ENCODE measurements at regions of chr5 and their contacts with region 1.

Region 1: GRCh38 chr5:92594031-92594430 is 987.0 kb downstream of the NR2F1-AS1 start:
- DNase-seq: no peak
- ATAC-seq: no peak

Region 2: GRCh38 chr5:92525131-92525530 is 68.9 kb before region 1 on chr5:
- intact Hi-C with region 1: loop called (anchors 2 kb)
- DNase-seq: no peak
- ATAC-seq: no peak

Region 3: GRCh38 chr5:92713208-92713816 is 119.3 kb after region 1 on chr5:
- intact Hi-C with region 1: no loop called
- DNase-seq: no peak
- ATAC-seq: no peak